ENCODE measurements at regions of chr1 and their contacts with region 1.

Region 1: GRCh38 chr1:68120136-68120791 is 69.8 kb upstream of the DIRAS3 start:
- DNase-seq: peak in 1 of 2 experiments; percentile 75
- H3K4me3 ChIP-seq: no peak overlapping the region
- H3K27ac ChIP-seq: no peak overlapping the region
- H3K4me1 ChIP-seq: peaks cover 0 to 2% (median 0%) of the 10 kb centered on the region in 4 experiments; a peak in 1 of 7 replicates
- H3K27me3 ChIP-seq: no peaks in the 10 kb centered on the region
- CTCF ChIP-seq: peak in 2 of 3 experiments; percentile 86 to 93; a peak in 3 of 4 replicates
- EP300 ChIP-seq: no peak
- POLR2A ChIP-seq: no peak
- RAD21 ChIP-seq: peak; percentile 95 to 99

Region 2: GRCh38 chr1:67957066-67957465 is 163.2 kb before region 1 on chr1:
- CTCF ChIA-PET with region 1: no interaction called
- POLR2A ChIA-PET with region 1: no interaction called
- DNase-seq: no peak
- H3K4me3 ChIP-seq: no peak overlapping the region
- H3K27ac ChIP-seq: no peak overlapping the region
- H3K4me1 ChIP-seq: no peaks in the 10 kb centered on the region
- H3K27me3 ChIP-seq: no peaks in the 10 kb centered on the region
- CTCF ChIP-seq: no peak
- EP300 ChIP-seq: no peak
- POLR2A ChIP-seq: no peak
- RAD21 ChIP-seq: no peak

Region 3: GRCh38 chr1:68057564-68057963 is 62.7 kb before region 1 on chr1:
- CTCF ChIA-PET with region 1: interaction called, 16 read pairs
- POLR2A ChIA-PET with region 1: no interaction called
- DNase-seq: no peak
- H3K4me3 ChIP-seq: no peak overlapping the region
- H3K27ac ChIP-seq: no peak overlapping the region
- H3K4me1 ChIP-seq: peaks cover 0 to 4% (median 0%) of the 10 kb centered on the region in 4 experiments; a peak in 3 of 7 replicates
- H3K27me3 ChIP-seq: no peaks in the 10 kb centered on the region
- CTCF ChIP-seq: peak; percentile 58 to 71 (median 62)
- EP300 ChIP-seq: no peak
- POLR2A ChIP-seq: no peak
- RAD21 ChIP-seq: peak; percentile 27 to 43; a peak in 3 of 4 replicates

Region 4: DNA sequence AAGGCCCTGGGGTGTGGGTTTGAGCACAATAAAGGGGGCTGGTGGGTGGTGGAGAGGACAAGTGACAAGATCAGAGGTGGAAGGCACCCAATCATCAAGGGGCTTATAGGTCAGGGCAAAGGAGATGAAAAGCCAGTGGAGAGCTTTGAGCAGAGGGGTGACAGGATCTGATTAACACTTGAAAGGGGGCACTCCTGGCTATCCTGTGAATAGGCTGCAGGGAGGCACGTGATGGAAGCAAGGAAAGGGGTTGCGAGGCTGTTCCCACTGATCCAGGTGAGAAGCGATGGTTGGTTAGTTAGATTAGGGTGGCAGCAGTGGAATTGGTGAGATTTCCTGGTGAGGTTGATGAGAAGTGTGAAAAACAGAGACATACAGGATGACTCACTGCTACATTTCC is 31.4 kb after region 1 on chr1:
- CTCF ChIA-PET with region 1: interaction called, 10 read pairs
- POLR2A ChIA-PET with region 1: no interaction called
- DNase-seq: no peak
- H3K4me3 ChIP-seq: no peak overlapping the region
- H3K27ac ChIP-seq: no peak overlapping the region
- H3K4me1 ChIP-seq: no peaks in the 10 kb centered on the region
- H3K27me3 ChIP-seq: no peaks in the 10 kb centered on the region
- CTCF ChIP-seq: no peak
- EP300 ChIP-seq: no peak
- POLR2A ChIP-seq: no peak
- RAD21 ChIP-seq: no peak

Region 5: GRCh38 chr1:68173911-68174737 is 53.9 kb after region 1 on chr1:
- CTCF ChIA-PET with region 1: interaction called, 19 read pairs
- POLR2A ChIA-PET with region 1: no interaction called
- DNase-seq: no peak
- H3K4me3 ChIP-seq: no peak overlapping the region
- H3K27ac ChIP-seq: no peak overlapping the region
- H3K4me1 ChIP-seq: no peaks in the 10 kb centered on the region
- H3K27me3 ChIP-seq: no peaks in the 10 kb centered on the region
- CTCF ChIP-seq: no peak
- EP300 ChIP-seq: no peak
- POLR2A ChIP-seq: no peak
- RAD21 ChIP-seq: no peak

Region 6: GRCh38 chr1:68293609-68294366 is 173.5 kb after region 1 on chr1:
- CTCF ChIA-PET with region 1: interaction called, 11 read pairs
- POLR2A ChIA-PET with region 1: no interaction called
- DNase-seq: peak; percentile 58 to 75
- H3K4me3 ChIP-seq: peak overlapping the region; percentile 0 to 50 (median 16); a peak in 5 of 8 replicates
- H3K27ac ChIP-seq: 0 out of 2 replicates have a peak overlapping the region, but pooled peaks have one; percentile 17
- H3K4me1 ChIP-seq: peaks cover 9 to 19% (median 16%) of the 10 kb centered on the region in 4 experiments
- H3K27me3 ChIP-seq: peaks cover 14 to 56% (median 45%) of the 10 kb centered on the region in 4 experiments
- CTCF ChIP-seq: no peak
- EP300 ChIP-seq: peak in 1 of 2 experiments; percentile 86; a peak in 1 of 3 replicates
- POLR2A ChIP-seq: no peak
- RAD21 ChIP-seq: 0 out of 4 replicates have a peak, but pooled peaks of 1 of the 2 experiments have one; percentile 2

Region 7: DNA sequence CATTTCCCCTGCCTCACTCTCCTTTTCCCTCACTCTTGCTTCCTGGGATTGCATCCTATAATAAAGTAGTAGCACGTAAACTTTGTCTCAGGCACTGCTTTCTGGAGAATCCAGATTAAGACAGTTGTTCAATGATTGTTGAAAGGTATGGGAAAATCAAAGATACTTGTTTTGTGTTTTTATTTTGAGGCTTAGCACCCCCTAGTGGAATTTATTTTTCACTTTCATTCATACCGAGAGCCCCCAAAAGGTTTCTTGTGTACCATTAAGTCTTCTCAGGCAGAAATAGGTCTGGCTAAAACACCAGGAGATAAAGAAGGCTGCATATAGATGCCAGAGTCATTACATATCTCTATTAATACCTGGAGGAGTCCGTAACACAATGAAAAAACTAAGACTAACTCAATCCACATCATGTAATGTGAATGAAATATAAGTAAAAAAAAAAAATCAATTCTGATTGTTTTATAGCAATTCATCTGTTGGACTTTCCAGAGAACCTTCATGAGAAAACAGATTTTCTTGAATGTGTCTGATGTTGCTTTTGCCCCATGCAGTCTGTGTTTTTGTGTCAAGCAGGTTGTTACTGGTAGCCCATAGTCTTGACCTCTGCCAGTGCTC is 226.0 kb after region 1 on chr1:
- CTCF ChIA-PET with region 1: interaction called, 202 read pairs
- POLR2A ChIA-PET with region 1: interaction called, 4 read pairs
- DNase-seq: no peak
- H3K4me3 ChIP-seq: no peak overlapping the region
- H3K27ac ChIP-seq: no peak overlapping the region
- H3K4me1 ChIP-seq: no peaks in the 10 kb centered on the region
- H3K27me3 ChIP-seq: no peaks in the 10 kb centered on the region
- CTCF ChIP-seq: peak in 2 of 3 experiments; percentile 20 to 21; a peak in 2 of 4 replicates
- EP300 ChIP-seq: no peak
- POLR2A ChIP-seq: no peak
- RAD21 ChIP-seq: peak; percentile 37 to 40

Region 8: DNA sequence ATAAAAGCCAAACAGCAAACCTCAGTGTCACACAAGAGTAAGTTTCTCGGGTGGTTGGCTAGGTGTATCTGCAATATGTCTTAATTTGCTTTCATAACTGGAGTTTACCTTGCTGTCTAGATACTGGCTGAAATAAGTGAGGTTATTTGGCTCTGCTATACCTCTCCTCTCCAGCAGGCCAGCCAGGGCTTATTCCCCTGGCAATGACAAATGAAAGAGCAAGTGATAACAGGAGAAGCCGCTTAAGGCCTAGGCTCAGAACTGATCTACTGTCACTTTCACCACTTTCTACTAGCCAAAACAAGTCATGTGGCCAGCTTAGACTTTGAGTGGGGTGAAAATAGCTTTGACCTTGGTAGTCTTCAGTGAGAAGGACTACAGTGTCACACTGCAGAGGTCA is 334.3 kb after region 1 on chr1:
- CTCF ChIA-PET with region 1: interaction called, 12 read pairs
- POLR2A ChIA-PET with region 1: no interaction called
- DNase-seq: no peak
- H3K4me3 ChIP-seq: no peak overlapping the region
- H3K27ac ChIP-seq: no peak overlapping the region
- H3K4me1 ChIP-seq: peaks cover 0 to 2% (median 0%) of the 10 kb centered on the region in 4 experiments; a peak in 1 of 7 replicates
- H3K27me3 ChIP-seq: no peaks in the 10 kb centered on the region
- CTCF ChIP-seq: peak in 1 of 3 experiments; percentile 49; a peak in 1 of 4 replicates
- EP300 ChIP-seq: no peak
- POLR2A ChIP-seq: no peak
- RAD21 ChIP-seq: peak in 1 of 2 experiments; percentile 20; a peak in 1 of 4 replicates